GM12878 (cell line): ENCODE measurements at regions of chr3 and their contacts with region 1.

Region 1: GRCh38 chr3:67647390-67647878 is 7.0 kb downstream of the SUCLG2 start:
- DNase-seq: no peak
- ATAC-seq: no peak
- H3K4me3 ChIP-seq: no peak overlapping the region
- H3K27ac ChIP-seq: no peak overlapping the region
- H3K4me1 ChIP-seq: peaks cover 25% of the 10 kb centered on the region
- H3K27me3 ChIP-seq: no peaks in the 10 kb centered on the region
- CTCF ChIP-seq: no peak
- EP300 ChIP-seq: no peak
- POLR2A ChIP-seq: no peak
- RAD21 ChIP-seq: no peak

Region 2: DNA sequence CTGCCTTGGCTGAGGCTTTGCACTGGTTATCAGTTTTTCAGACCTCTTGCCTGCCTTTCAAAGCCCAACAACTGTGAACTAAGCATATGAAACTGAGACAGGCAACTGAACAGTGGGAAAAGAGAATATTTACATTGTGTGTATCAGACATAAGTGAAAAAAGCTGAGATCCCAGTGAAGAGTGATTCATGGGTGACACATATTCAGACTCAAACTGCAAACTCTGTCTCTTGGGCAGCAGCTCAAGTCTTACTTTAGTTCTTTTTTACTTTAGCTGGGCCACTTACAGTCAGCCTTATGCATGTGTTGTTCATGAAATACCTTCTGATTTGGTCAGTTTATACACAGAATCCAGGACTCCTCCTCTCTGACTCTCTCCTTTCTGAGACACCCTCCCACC is 12.2 kb before region 1 on chr3:
- CTCF ChIA-PET with region 1: interaction called, 5 read pairs
- POLR2A ChIA-PET with region 1: interaction called, 4 read pairs
- RAD21 ChIA-PET with region 1: no interaction called
- SMC1A ChIA-PET with region 1: interaction called, 10 read pairs
- in situ Hi-C with region 1: no loop called
- intact Hi-C with region 1: no loop called
- DNase-seq: no peak
- ATAC-seq: no peak
- H3K4me3 ChIP-seq: no peak overlapping the region
- H3K27ac ChIP-seq: no peak overlapping the region
- H3K4me1 ChIP-seq: no peaks in the 10 kb centered on the region
- H3K27me3 ChIP-seq: no peaks in the 10 kb centered on the region
- CTCF ChIP-seq: no peak
- EP300 ChIP-seq: no peak
- POLR2A ChIP-seq: no peak
- RAD21 ChIP-seq: no peak